T-cell (primary cell): ENCODE measurements at regions of chr6 and their contacts with region 1.

Region 1: DNA sequence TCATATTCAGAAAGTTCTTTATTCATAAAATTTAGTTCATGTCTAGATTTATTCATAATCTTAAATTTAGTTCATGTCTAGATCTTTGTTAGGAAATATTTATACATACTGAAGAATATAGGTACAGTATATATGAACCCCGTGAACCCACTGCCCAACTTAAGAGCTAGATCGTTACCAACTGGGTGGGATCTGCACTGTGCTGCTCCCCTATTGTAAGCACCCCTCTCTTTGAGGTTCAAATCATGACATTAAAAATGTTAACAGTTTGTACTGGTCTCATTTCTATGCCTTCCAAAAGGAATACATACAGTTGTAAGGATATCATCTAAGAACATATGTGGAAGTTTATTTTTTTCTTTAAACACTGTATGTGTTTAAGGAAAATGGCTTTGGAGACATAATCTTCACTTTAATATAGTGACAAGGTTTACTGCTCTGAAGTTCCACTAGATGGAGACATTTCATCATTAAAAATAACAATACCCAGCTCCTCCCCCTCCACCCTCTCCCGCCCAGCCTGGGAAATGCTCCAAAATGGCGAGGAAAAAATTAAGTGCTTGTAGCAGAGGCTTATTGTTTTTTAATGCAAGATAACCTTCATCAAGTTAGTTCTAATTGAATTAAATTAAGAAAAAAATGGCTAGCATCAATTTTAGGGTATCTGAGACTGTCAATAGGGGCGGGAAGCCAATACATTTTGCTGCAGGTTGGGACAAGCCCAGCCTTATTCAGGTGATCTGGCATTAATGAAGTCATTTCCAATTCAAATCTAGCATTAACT is 104.1 kb upstream of the TRAF3IP2 start:
- DNase-seq: peak in 34 of 35 experiments; percentile 14 to 83 (median 54)
- ATAC-seq: peak; percentile 81 to 86 (median 83)
- H3K4me3 ChIP-seq: no peak overlapping the region
- H3K4me3 Mint-ChIP-seq: peak overlapping the region in 1 of 3 donors; percentile 30
- H3K27ac ChIP-seq: peak overlapping the region; percentile 59
- H3K27ac Mint-ChIP-seq: peak overlapping the region; percentile 81 to 87
- H3K4me1 ChIP-seq: peaks cover 37 to 42% of the 10 kb centered on the region in 2 experiments
- H3K4me1 Mint-ChIP-seq: peaks cover 50 to 70% (median 53%) of the 10 kb centered on the region in 3 donors
- H3K27me3 ChIP-seq: no peaks in the 10 kb centered on the region
- H3K27me3 Mint-ChIP-seq: no peaks in the 10 kb centered on the region

Region 2: GRCh38 chr6:109772961-109773431 is 1936.8 kb before region 1 on chr6:
- CTCF ChIA-PET with region 1: no interaction called
- POLR2A ChIA-PET with region 1: no interaction called
- DNase-seq: no peak
- ATAC-seq: no peak
- H3K4me3 ChIP-seq: no peak overlapping the region
- H3K4me3 Mint-ChIP-seq: no peak overlapping the region
- H3K27ac ChIP-seq: no peak overlapping the region
- H3K27ac Mint-ChIP-seq: no peak overlapping the region
- H3K4me1 ChIP-seq: no peaks in the 10 kb centered on the region
- H3K4me1 Mint-ChIP-seq: peaks cover 0 to 9% (median 9%) of the 10 kb centered on the region in 3 donors
- H3K27me3 ChIP-seq: no peaks in the 10 kb centered on the region
- H3K27me3 Mint-ChIP-seq: no peaks in the 10 kb centered on the region

Region 3: GRCh38 chr6:111683749-111684267 is 26.0 kb before region 1 on chr6:
- CTCF ChIA-PET with region 1: no interaction called
- POLR2A ChIA-PET with region 1: no interaction called
- DNase-seq: peak in 1 of 35 experiments; percentile 26
- ATAC-seq: peak in 2 of 4 experiments; percentile 31 to 38
- H3K4me3 ChIP-seq: no peak overlapping the region
- H3K4me3 Mint-ChIP-seq: peak overlapping the region; percentile 0 to 62 (median 37)
- H3K27ac ChIP-seq: peak overlapping the region; percentile 49
- H3K27ac Mint-ChIP-seq: peak overlapping the region; percentile 84 to 92
- H3K4me1 ChIP-seq: peaks cover 9 to 52% of the 10 kb centered on the region in 2 experiments
- H3K4me1 Mint-ChIP-seq: peaks cover 89 to 93% (median 89%) of the 10 kb centered on the region in 3 donors
- H3K27me3 ChIP-seq: no peaks in the 10 kb centered on the region
- H3K27me3 Mint-ChIP-seq: no peaks in the 10 kb centered on the region

Region 4: GRCh38 chr6:111743862-111744692 is 34.3 kb after region 1 on chr6:
- CTCF ChIA-PET with region 1: no interaction called
- POLR2A ChIA-PET with region 1: interaction called, 3 to 10 read pairs
- DNase-seq: no peak
- ATAC-seq: no peak
- H3K4me3 ChIP-seq: no peak overlapping the region
- H3K4me3 Mint-ChIP-seq: no peak overlapping the region
- H3K27ac ChIP-seq: no peak overlapping the region
- H3K27ac Mint-ChIP-seq: peak overlapping the region; percentile 55 to 63
- H3K4me1 ChIP-seq: peaks cover 43 to 76% of the 10 kb centered on the region in 2 experiments
- H3K4me1 Mint-ChIP-seq: peaks cover 94 to 96% (median 95%) of the 10 kb centered on the region in 3 donors
- H3K27me3 ChIP-seq: no peaks in the 10 kb centered on the region
- H3K27me3 Mint-ChIP-seq: no peaks in the 10 kb centered on the region

Region 5: DNA sequence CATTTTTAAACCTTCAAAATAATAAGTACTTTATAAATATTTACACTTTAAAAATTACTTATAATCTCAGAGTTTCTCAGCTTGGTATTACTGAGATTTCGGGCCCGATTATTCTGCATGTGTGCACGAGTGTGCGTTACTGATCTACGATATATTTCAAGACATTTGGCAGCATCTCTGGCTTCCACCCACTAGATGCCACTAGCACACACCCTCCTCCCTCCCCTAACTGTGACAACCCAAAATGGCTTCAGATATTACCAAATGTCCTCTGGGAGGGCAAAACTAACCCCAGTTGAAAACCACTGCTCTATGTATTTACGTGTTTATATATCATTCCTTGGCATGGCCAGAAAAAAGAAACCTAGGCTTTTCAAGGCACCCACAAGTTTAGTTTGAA is 67.5 kb after region 1 on chr6:
- CTCF ChIA-PET with region 1: interaction called in 1 of 2 experiments, 10 read pairs
- POLR2A ChIA-PET with region 1: interaction called in 1 of 2 experiments, 11 read pairs
- DNase-seq: peak in 15 of 35 experiments; percentile 12 to 73 (median 35)
- ATAC-seq: peak; percentile 35 to 60 (median 57)
- H3K4me3 ChIP-seq: no peak overlapping the region
- H3K4me3 Mint-ChIP-seq: peak overlapping the region; percentile 6 to 39 (median 34)
- H3K27ac ChIP-seq: peak overlapping the region; percentile 73
- H3K27ac Mint-ChIP-seq: peak overlapping the region; percentile 87 to 88
- H3K4me1 ChIP-seq: peaks cover 40 to 82% of the 10 kb centered on the region in 2 experiments
- H3K4me1 Mint-ChIP-seq: peaks cover 88 to 93% (median 90%) of the 10 kb centered on the region in 3 donors
- H3K27me3 ChIP-seq: no peaks in the 10 kb centered on the region
- H3K27me3 Mint-ChIP-seq: no peaks in the 10 kb centered on the region

Region 6: GRCh38 chr6:111837641-111838500 is 128.1 kb after region 1 on chr6:
- CTCF ChIA-PET with region 1: no interaction called
- POLR2A ChIA-PET with region 1: no interaction called
- DNase-seq: peak in 11 of 35 experiments; percentile 15 to 69 (median 36)
- ATAC-seq: peak; percentile 47 to 67 (median 58)
- H3K4me3 ChIP-seq: peak overlapping the region in 1 of 2 donors; percentile 26
- H3K4me3 Mint-ChIP-seq: peak overlapping the region in 2 of 3 donors; percentile 39 to 57
- H3K27ac ChIP-seq: peak overlapping the region; percentile 95
- H3K27ac Mint-ChIP-seq: no peak overlapping the region
- H3K4me1 ChIP-seq: peaks cover 78 to 86% of the 10 kb centered on the region in 2 experiments
- H3K4me1 Mint-ChIP-seq: peaks cover 0 to 39% (median 38%) of the 10 kb centered on the region in 3 donors
- H3K27me3 ChIP-seq: no peaks in the 10 kb centered on the region
- H3K27me3 Mint-ChIP-seq: no peaks in the 10 kb centered on the region

Region 7: GRCh38 chr6:111873178-111874024 is 163.6 kb after region 1 on chr6 and contains the start of gene FYN:
- CTCF ChIA-PET with region 1: interaction called in 1 of 2 experiments, 12 read pairs
- POLR2A ChIA-PET with region 1: no interaction called
- DNase-seq: peak; percentile 95 to 99 (median 98)
- ATAC-seq: peak; percentile 88 to 94 (median 92)
- H3K4me3 ChIP-seq: peak within 1 kb of the TSS; percentile 77 to 93
- H3K4me3 Mint-ChIP-seq: peak within 1 kb of the TSS; percentile 96 to 99 (median 98)
- H3K27ac ChIP-seq: peak within 1 kb of the TSS; percentile 80
- H3K27ac Mint-ChIP-seq: peak within 1 kb of the TSS; percentile 95 to 96
- H3K4me1 ChIP-seq: peaks cover 21 to 33% of the 10 kb centered on the region in 2 experiments
- H3K4me1 Mint-ChIP-seq: peaks cover 41 to 49% (median 45%) of the 10 kb centered on the region in 3 donors
- H3K27me3 ChIP-seq: no peaks in the 10 kb centered on the region
- H3K27me3 Mint-ChIP-seq: no peaks in the 10 kb centered on the region
- total RNA-seq, gene FYN: 466 to 573 (median 534) TPM

Region 8: DNA sequence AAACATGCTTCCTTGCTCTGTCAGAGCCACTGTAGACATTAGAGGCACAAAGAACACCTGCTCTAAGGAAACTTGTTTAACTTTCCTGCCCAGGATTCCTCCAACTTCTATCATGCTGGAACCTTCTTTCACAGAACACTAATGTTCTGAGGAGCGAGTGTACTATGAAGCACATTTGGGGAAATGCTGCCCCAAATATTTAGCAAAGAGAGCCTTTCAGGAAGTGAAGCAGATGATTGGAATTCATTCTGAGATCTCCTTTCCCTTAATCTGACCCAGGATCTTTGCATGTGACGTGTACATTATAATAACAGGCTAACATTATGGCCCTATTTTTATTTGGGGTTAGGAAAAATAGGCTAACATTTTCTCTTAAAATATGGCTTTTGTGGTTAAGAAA is 184.5 kb after region 1 on chr6:
- CTCF ChIA-PET with region 1: interaction called in 1 of 2 experiments, 13 read pairs
- POLR2A ChIA-PET with region 1: no interaction called
- DNase-seq: no peak
- ATAC-seq: no peak
- H3K4me3 ChIP-seq: no peak overlapping the region
- H3K4me3 Mint-ChIP-seq: no peak overlapping the region
- H3K27ac ChIP-seq: no peak overlapping the region
- H3K27ac Mint-ChIP-seq: no peak overlapping the region
- H3K4me1 ChIP-seq: no peaks in the 10 kb centered on the region
- H3K4me1 Mint-ChIP-seq: no peaks in the 10 kb centered on the region
- H3K27me3 ChIP-seq: no peaks in the 10 kb centered on the region
- H3K27me3 Mint-ChIP-seq: no peaks in the 10 kb centered on the region

Region 9: DNA sequence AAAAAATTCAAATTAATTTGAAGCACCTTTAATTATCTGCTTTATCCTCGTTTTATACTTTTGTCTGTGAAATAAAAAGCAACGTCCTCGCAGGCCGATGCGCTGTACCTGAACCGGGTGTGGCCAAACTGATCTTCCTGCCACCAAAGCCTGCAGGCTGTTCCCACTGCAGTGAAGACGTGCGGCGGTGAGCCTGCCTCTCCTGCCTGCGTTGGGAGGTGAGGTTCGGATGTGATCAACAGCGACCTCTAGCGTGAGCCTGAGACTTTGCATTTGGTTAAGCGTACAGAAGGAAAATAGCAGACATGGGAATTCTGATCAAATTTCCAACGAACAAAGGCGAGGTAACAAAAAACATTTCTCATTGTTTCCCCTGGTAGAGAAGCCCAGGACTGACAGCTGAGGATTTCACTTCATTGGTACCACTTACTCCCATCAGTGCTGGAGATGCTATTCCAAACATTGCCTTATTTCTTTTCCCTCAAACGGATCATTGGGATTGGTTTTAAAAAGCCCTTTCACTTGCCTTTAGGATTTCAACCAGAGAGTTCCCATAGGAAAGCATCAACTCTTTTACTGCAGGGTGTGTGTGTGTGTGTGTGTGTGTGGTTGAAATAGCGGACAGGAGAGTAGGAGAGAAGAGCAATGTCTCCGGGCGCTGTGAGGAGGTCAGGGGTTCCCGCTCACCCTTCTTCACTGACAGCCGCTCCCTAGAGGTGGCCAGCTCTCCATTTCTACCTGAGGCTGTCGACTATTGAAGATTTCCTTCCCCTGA is 287.5 kb after region 1 on chr6:
- CTCF ChIA-PET with region 1: interaction called, 6 to 12 read pairs
- POLR2A ChIA-PET with region 1: interaction called in 1 of 2 experiments, 4 read pairs
- DNase-seq: peak; percentile 60 to 91 (median 74)
- ATAC-seq: peak; percentile 56 to 78 (median 70)
- H3K4me3 ChIP-seq: peak overlapping the region; percentile 7 to 19
- H3K4me3 Mint-ChIP-seq: peak overlapping the region; percentile 55 to 71 (median 63)
- H3K27ac ChIP-seq: peak overlapping the region; percentile 10
- H3K27ac Mint-ChIP-seq: peak overlapping the region; percentile 80 to 87
- H3K4me1 ChIP-seq: peaks cover 37 to 41% of the 10 kb centered on the region in 2 experiments
- H3K4me1 Mint-ChIP-seq: peaks cover 47 to 50% (median 48%) of the 10 kb centered on the region in 3 donors
- H3K27me3 ChIP-seq: no peaks in the 10 kb centered on the region
- H3K27me3 Mint-ChIP-seq: no peaks in the 10 kb centered on the region

Region 10: GRCh38 chr6:112163295-112164257 is 453.8 kb after region 1 on chr6:
- CTCF ChIA-PET with region 1: interaction called in 1 of 2 experiments, 11 read pairs
- POLR2A ChIA-PET with region 1: no interaction called
- DNase-seq: peak; percentile 42 to 82 (median 68)
- ATAC-seq: peak; percentile 91 to 98 (median 96)
- H3K4me3 ChIP-seq: peak overlapping the region in 1 of 2 donors; percentile 5
- H3K4me3 Mint-ChIP-seq: peak overlapping the region; percentile 34 to 56 (median 55)
- H3K27ac ChIP-seq: no peak overlapping the region
- H3K27ac Mint-ChIP-seq: peak overlapping the region; percentile 19 to 54
- H3K4me1 ChIP-seq: peaks cover 2 to 8% of the 10 kb centered on the region in 2 experiments
- H3K4me1 Mint-ChIP-seq: peaks cover 14 to 15% (median 14%) of the 10 kb centered on the region in 3 donors
- H3K27me3 ChIP-seq: peaks cover 0 to 10% of the 10 kb centered on the region in 2 experiments
- H3K27me3 Mint-ChIP-seq: peaks cover 44 to 51% of the 10 kb centered on the region in 2 donors